Body of pancreas (tissue), 4 donors: ENCODE measurements at regions of chr4 and their contacts with region 1.

Region 1: GRCh38 chr4:83639849-83640493 is 104.1 kb downstream of the GPAT3 start:
- DNase-seq: peak; percentile 66 to 78 (median 69)
- ATAC-seq: peak; percentile 77
- H3K4me3 ChIP-seq: no peak overlapping the region
- H3K27ac ChIP-seq: no peak overlapping the region
- H3K4me1 ChIP-seq: no peaks in the 10 kb centered on the region
- H3K27me3 ChIP-seq: peaks cover 0 to 3% of the 10 kb centered on the region in 2 donors
- CTCF ChIP-seq: peak; percentile 67 to 91 (median 83)
- POLR2A ChIP-seq: no peak

Region 2: DNA sequence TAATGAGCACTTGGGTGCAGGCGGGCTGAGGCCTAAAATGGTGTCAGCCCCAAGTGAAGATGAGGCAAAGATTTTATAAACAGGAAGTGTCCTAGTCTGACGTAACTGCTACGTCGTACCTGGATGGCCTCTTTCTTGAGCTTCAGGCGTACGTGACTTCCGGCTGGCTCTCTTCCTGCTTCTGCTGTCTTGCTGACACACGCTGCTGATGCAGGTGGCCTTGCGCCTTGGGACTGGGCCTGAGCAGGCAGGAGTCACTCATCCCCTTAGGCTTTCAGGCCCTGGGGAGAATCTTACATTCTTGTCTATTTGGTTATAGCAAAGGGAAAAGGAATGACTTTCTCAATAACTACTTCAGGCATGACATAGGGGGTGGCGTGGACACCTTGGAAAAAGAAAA is 135.0 kb before region 1 on chr4:
- intact Hi-C with region 1: loop called (anchors 5 kb)
- DNase-seq: no peak
- ATAC-seq: no peak
- H3K4me3 ChIP-seq: no peak overlapping the region
- H3K27ac ChIP-seq: no peak overlapping the region
- H3K4me1 ChIP-seq: no peaks in the 10 kb centered on the region
- H3K27me3 ChIP-seq: no peaks in the 10 kb centered on the region
- CTCF ChIP-seq: no peak
- POLR2A ChIP-seq: no peak

Region 3: DNA sequence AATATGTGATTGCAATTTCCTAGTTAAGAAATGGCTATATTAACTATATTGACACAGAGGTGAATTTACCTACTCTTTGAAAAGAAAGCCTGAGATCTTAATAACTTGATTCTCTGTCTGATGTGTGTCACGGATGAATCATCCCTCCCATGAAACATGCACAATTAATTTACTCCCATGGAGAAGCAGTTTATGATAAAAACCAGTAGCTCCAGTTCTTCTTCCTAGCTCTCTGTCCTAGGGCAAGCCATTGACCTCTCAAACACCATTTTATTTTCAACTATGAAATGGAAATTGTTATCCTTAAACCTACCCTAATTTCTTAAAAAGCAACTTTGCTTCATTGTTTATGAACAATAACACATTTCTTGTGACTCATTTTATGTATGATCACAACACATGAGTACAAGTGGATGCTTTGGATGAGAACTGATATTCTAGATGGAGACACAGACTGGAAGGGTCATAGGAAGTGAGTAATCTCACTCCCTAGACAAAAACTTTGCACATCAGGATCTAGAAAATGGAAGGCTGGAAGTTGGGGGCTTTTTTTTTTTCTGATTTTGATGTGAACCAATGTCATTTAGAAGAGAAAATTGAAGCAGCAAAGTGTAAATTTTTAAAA is 334.3 kb after region 1 on chr4:
- intact Hi-C with region 1: no loop called
- DNase-seq: no peak
- ATAC-seq: no peak
- H3K4me3 ChIP-seq: no peak overlapping the region
- H3K27ac ChIP-seq: no peak overlapping the region
- H3K4me1 ChIP-seq: no peaks in the 10 kb centered on the region
- H3K27me3 ChIP-seq: no peaks in the 10 kb centered on the region
- CTCF ChIP-seq: no peak
- POLR2A ChIP-seq: no peak

Region 4: DNA sequence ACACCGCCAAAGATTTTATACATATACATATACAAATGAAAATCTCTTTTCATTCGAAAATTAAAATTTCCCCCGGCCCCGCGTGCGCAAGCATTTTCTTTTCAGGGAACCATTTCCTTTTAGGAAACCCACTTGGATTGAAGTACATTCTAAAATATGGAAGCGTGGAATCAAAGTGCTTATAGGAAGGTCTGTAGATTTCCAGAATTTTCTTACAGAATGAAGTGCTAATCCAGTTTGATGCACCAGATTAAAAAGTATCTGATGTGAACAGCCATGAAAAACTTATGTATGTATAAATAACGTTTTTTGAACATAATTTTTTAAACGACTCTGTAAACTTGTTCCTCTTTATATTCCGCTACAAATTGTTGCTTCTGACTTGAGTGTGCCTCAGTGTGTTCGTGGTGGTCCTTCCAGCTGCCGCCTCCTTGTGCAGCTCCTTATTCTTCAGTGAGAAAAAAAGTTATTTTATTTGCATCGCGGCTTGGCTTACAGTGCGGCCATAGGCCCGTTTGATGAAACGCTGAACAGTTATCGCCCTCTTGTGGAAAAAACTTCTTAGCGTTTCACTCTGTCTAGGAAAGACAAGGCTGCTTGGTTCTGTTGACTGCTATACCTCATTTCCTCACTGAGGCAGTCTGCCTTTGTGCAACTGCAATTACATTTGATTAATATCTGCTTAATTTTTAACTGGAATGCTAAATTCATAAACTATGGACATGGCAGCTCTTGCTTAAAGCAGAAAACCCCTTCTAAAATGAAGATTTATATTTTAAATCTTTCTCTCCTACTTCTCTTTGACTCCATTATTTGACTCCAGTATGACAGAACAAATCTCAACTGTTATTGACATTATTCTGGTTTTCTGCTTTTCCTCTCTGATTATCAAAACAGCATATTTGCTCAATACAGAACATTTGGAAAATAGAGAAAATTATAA is 863.8 kb after region 1 on chr4:
- intact Hi-C with region 1: loop called (anchors 10 kb)
- DNase-seq: peak in 3 of 4 donors; percentile 34 to 57 (median 47)
- ATAC-seq: peak; percentile 21
- H3K4me3 ChIP-seq: no peak overlapping the region
- H3K27ac ChIP-seq: no peak overlapping the region
- H3K4me1 ChIP-seq: peaks cover 10% of the 10 kb centered on the region
- H3K27me3 ChIP-seq: peaks cover 0 to 11% of the 10 kb centered on the region in 2 donors
- CTCF ChIP-seq: peak; percentile 45 to 75 (median 63)
- POLR2A ChIP-seq: no peak